Naive thymus-derived CD4-positive, alpha-beta T cell (primary cell): ENCODE measurements at regions of chr5 and their contacts with region 1.

Region 1: DNA sequence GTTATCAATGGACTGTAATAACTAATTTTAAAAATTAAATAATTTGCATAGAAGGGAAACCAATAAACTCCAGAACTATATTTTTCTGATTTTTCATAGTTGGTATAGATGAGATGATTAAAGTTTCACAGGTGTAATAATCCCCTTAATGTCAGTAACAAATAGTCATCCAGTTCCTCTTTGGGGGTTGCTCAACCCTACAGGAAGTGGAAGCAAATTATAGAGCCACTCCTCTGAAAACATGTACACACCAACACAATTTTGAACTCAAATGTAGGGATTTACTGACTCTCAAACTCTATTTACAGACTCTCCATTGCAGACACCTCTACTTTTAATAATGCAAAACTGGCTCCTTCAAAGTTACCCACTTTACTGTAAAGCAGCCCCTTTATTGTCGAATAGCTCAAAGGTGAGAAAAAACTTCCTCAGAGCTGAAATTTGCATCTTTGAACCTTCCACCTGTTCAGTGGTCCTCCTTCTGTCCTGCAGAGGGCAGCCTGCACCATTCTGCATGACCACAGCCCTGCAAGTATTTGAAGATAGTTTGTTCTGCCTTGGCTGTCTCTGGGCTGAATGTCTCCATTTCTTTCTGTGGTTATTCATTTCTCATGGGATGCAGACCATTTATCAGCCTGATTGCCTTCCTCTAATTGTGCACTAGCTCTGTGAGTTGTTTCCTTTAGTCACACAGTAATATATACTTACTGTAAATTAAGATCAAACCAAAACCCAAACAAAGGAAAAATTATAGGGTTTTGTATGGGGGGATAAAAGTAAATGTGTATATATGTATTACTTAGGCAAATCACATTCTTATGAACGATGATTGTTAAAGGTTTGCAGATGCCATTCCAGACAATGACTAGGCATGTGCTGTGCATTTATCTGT is 383.2 kb upstream of the SGCD start:
- DNase-seq: peak in 8 of 9 donors; percentile 1 to 31 (median 22)
- ATAC-seq: peak; percentile 62
- H3K4me3 ChIP-seq: no peak overlapping the region
- H3K4me3 Mint-ChIP-seq: no peak overlapping the region
- H3K27ac ChIP-seq: no peak overlapping the region
- H3K27ac Mint-ChIP-seq: peak overlapping the region in 1 of 9 donors; percentile 32
- H3K4me1 ChIP-seq: no peaks in the 10 kb centered on the region
- H3K4me1 Mint-ChIP-seq: peaks cover 0 to 6% (median 0%) of the 10 kb centered on the region in 7 donors
- H3K27me3 ChIP-seq: no peaks in the 10 kb centered on the region
- H3K27me3 Mint-ChIP-seq: peaks cover 11 to 25% (median 19%) of the 10 kb centered on the region in 5 donors

Region 2: DNA sequence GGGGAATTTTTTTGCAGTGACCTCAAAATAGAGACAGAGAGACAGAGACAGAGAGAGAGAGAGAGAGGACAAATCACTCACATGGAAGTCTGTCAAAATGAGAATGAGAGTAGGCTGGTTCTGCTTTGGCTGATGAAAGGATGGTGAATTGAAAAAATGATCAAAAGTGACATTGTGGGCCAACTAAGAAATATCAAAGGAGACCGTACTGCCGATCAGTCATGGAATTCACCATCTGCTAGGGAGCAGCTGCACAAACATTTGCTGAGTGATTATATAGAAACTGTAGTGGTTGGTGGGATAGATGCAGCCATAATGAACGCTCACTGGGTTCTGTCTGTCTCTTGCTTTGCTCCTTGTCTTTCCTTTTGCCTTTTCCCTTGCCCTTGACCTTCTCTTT is 93.4 kb before region 1 on chr5:
- CTCF ChIA-PET with region 1: no interaction called
- POLR2A ChIA-PET with region 1: no interaction called
- intact Hi-C with region 1: no loop called
- DNase-seq: no peak
- ATAC-seq: no peak
- H3K4me3 ChIP-seq: no peak overlapping the region
- H3K4me3 Mint-ChIP-seq: no peak overlapping the region
- H3K27ac ChIP-seq: no peak overlapping the region
- H3K27ac Mint-ChIP-seq: no peak overlapping the region
- H3K4me1 ChIP-seq: no peaks in the 10 kb centered on the region
- H3K4me1 Mint-ChIP-seq: no peaks in the 10 kb centered on the region
- H3K27me3 ChIP-seq: no peaks in the 10 kb centered on the region
- H3K27me3 Mint-ChIP-seq: peaks cover 0 to 23% (median 14%) of the 10 kb centered on the region in 5 donors

Region 3: DNA sequence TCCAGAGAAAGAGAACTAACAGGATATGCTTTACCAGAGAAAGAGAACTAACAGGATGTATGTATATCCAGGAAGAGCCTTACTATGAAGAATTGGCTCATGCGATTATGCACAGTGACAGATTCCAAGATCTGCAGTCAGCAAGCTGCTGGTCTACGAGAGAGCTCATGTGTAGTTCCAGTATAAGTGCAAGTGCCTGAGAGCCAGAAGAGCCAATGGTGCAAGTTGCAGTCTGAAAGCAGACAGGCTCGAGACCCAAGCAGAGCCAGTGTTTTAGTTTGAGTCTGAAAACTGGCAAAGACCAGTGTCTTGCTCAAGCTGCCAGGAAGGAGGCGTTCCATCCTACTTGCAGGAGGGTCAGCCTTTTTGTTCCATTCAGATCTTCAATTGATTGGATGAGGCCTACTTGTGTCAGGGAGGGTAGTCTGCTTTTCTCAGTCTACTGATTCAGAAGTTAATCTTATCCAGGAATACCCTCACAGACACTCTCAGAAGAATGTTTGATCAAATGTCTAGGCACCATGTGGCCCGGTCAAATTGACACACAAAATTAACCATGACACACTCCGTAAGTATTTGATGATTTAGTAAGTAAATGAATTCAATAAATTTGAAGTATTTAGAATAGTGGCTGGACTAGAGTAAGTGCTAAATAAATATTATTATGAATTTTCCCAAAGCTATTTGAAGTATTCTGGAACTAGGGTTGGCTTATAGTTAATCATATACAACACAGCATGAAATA is 11.1 kb after region 1 on chr5:
- CTCF ChIA-PET with region 1: no interaction called
- POLR2A ChIA-PET with region 1: no interaction called
- intact Hi-C with region 1: no loop called
- DNase-seq: no peak
- ATAC-seq: no peak
- H3K4me3 ChIP-seq: no peak overlapping the region
- H3K4me3 Mint-ChIP-seq: no peak overlapping the region
- H3K27ac ChIP-seq: no peak overlapping the region
- H3K27ac Mint-ChIP-seq: no peak overlapping the region
- H3K4me1 ChIP-seq: no peaks in the 10 kb centered on the region
- H3K4me1 Mint-ChIP-seq: no peaks in the 10 kb centered on the region
- H3K27me3 ChIP-seq: no peaks in the 10 kb centered on the region
- H3K27me3 Mint-ChIP-seq: peaks cover under 1 to 22% (median 8%) of the 10 kb centered on the region in 5 donors

Region 4: GRCh38 chr5:156076912-156077311 is 133.2 kb after region 1 on chr5:
- CTCF ChIA-PET with region 1: no interaction called
- POLR2A ChIA-PET with region 1: no interaction called
- intact Hi-C with region 1: no loop called
- DNase-seq: no peak
- ATAC-seq: no peak
- H3K4me3 ChIP-seq: no peak overlapping the region
- H3K4me3 Mint-ChIP-seq: no peak overlapping the region
- H3K27ac ChIP-seq: no peak overlapping the region
- H3K27ac Mint-ChIP-seq: no peak overlapping the region
- H3K4me1 ChIP-seq: no peaks in the 10 kb centered on the region
- H3K4me1 Mint-ChIP-seq: no peaks in the 10 kb centered on the region
- H3K27me3 ChIP-seq: peaks cover 0 to 2% of the 10 kb centered on the region in 2 donors
- H3K27me3 Mint-ChIP-seq: peaks cover 0 to 19% (median 8%) of the 10 kb centered on the region in 5 donors

Region 5: DNA sequence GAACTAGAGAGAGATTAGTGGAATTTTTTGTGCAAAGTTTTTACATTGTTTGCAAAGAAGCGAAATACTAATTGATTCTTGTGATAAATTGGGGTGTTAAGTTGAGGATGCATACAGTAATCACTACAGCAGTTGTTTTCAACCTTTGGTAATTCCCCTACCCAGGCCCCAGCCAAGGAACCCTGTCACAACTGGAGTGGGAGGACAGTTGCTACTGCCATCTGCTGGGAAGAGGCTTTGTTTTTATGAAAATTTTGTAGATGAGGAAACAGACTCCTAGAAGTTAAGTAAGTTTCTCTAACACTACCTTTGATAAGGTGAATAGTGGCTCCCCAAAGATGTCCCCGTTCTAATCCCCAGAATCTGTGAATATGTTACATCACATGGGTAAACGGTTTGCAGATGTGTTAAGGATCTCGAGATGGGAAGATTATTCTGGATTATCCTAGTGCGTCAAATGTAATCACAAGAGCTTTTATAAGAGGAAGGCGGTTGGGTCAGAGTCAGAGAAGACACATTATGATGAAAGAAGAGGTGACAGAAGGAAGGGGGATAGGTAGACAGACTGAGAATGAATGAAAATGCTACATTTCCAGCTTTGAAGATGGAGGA is 872.3 kb after region 1 on chr5:
- CTCF ChIA-PET with region 1: no interaction called
- POLR2A ChIA-PET with region 1: no interaction called
- intact Hi-C with region 1: loop called in 1 of 2 experiments (anchors 1 kb)
- DNase-seq: peak in 3 of 9 donors; percentile 7 to 42 (median 20)
- ATAC-seq: no peak
- H3K4me3 ChIP-seq: no peak overlapping the region
- H3K4me3 Mint-ChIP-seq: no peak overlapping the region
- H3K27ac ChIP-seq: no peak overlapping the region
- H3K27ac Mint-ChIP-seq: peak overlapping the region in 1 of 9 donors; percentile 8
- H3K4me1 ChIP-seq: no peaks in the 10 kb centered on the region
- H3K4me1 Mint-ChIP-seq: peaks cover 0 to 6% (median 0%) of the 10 kb centered on the region in 7 donors
- H3K27me3 ChIP-seq: no peaks in the 10 kb centered on the region
- H3K27me3 Mint-ChIP-seq: peaks cover 0 to 2% (median 0%) of the 10 kb centered on the region in 5 donors